ENCODE measurements at regions of chr5 and their contacts with region 1.

Region 1: GRCh38 chr5:97735209-97735608 is 552.2 kb upstream of the RIOK2 start:
- DNase-seq: peak; percentile 85
- ATAC-seq: peak; percentile 95
- H3K4me3 ChIP-seq: no peak overlapping the region
- H3K27ac ChIP-seq: peak overlapping the region; percentile 28
- H3K4me1 ChIP-seq: peaks cover 11% of the 10 kb centered on the region
- H3K27me3 ChIP-seq: no peaks in the 10 kb centered on the region
- CTCF ChIP-seq: no peak

Region 2: DNA sequence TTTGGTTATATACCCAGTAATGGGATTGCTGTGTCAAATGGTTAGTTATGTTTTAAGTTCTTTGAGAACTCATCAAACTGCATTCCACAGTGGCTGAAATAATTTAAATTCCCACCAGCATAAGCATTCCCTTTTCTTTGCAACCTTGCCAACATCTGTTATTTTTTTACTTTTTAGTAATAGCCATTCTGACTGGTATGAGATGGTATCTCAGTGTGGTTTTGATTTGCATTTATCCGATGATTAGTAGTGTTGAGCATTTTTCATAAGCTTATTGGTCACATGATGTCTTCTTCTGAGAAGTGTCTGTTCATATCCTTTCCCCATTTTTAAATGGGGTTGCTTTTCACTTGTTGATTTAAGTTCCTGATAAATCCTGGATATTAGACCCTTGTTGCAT is 116.5 kb before region 1 on chr5:
- CTCF ChIA-PET with region 1: no interaction called
- POLR2A ChIA-PET with region 1: no interaction called
- intact Hi-C with region 1: no loop called
- DNase-seq: no peak
- ATAC-seq: no peak
- H3K4me3 ChIP-seq: no peak overlapping the region
- H3K27ac ChIP-seq: no peak overlapping the region
- H3K4me1 ChIP-seq: no peaks in the 10 kb centered on the region
- H3K27me3 ChIP-seq: no peaks in the 10 kb centered on the region
- CTCF ChIP-seq: no peak

Region 3: GRCh38 chr5:97838214-97838613 is 103.0 kb after region 1 on chr5:
- CTCF ChIA-PET with region 1: no interaction called
- POLR2A ChIA-PET with region 1: no interaction called
- intact Hi-C with region 1: loop called (anchors 2 kb)
- DNase-seq: peak; percentile 96
- ATAC-seq: peak; percentile 81
- H3K4me3 ChIP-seq: no peak overlapping the region
- H3K27ac ChIP-seq: 0 out of 2 replicates have a peak overlapping the region, but pooled peaks have one; percentile 9
- H3K4me1 ChIP-seq: peaks cover 29% of the 10 kb centered on the region
- H3K27me3 ChIP-seq: peaks cover 5% of the 10 kb centered on the region; the same call in 1 of the 2 replicates
- CTCF ChIP-seq: no peak

Region 4: DNA sequence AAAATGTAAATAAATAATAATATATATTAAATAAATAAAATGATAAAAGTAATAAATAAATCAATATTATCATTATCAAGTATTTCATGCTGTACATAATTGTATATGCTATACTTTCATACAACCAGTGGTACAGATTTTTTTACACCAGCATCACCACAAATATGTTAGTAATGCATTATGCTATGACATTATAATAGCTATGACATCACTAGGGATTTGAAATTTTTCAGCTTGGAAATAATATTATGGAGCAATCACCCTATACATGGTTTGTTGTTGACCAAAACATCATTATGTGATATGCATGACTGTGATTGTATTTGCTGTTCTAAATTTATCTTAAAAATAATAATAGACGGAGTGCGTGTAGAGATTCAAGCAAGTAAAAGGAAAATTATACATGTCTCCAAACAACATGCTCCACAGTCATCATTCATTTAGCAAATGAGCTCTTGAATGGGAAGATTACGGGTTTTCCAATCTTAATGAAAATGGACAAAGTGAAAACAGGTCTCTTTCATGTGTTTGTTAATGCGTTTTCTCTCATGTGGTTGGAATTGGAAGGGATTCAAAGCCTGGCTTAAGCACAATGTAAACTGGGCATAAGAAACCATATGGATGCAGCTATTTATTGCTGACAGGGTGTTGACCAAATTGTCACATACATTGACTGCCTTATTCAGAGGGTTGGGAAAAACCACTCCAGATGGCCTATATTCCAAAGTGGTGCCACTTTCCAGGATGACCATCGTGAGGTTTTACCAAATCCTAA is 395.2 kb after region 1 on chr5:
- CTCF ChIA-PET with region 1: no interaction called
- POLR2A ChIA-PET with region 1: no interaction called
- intact Hi-C with region 1: no loop called
- DNase-seq: no peak
- ATAC-seq: no peak
- H3K4me3 ChIP-seq: no peak overlapping the region
- H3K27ac ChIP-seq: no peak overlapping the region
- H3K4me1 ChIP-seq: no peaks in the 10 kb centered on the region
- H3K27me3 ChIP-seq: no peaks in the 10 kb centered on the region
- CTCF ChIP-seq: no peak

Measured in PC-3 (cell line).